Caco-2 (cell line): ENCODE measurements at regions of chr20 and their contacts with region 1.

Region 1: DNA sequence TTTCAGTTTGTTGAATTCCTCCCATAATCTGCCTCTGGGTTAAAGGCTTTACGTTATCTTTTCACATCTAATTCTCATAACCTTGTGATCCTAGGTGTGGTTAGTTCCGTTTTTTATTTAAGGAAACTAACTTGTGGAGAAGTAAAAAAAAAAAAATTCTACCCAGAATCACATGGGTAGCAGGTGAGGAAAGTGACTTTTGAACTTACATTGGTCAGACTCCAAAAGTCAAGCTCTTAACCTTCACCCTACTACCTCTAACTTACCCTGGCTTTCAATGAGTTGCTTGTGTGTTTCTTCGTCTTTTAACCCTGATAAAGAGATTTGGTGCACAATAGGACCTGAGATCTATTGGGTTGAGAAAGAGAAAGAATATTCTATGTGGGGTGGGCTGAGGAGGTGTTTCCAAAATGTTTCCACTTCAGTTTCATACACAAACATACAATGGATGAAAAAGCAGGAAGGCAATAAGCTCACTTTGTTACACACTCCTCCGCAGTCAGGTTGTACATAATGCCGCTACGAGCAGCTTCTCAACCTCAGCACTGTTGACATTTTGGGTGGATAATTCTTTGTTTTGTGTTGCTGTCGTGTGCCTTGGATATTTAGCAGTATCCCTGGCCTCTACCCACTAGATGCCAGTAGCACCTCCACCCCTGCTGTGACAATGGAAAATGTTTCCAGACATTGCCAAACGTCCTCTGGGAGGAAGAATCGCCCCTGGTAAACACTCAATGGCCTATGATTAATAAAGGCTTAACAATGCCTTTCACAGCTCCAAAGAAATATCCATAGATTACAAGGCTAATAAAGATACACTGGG is 193.0 kb upstream of the ZNF217 start:
- DNase-seq: peak; percentile 47 to 67
- H3K4me3 ChIP-seq: no peak overlapping the region; the same call in 1 of the 2 replicates
- H3K4me3 Mint-ChIP-seq: peak overlapping the region; percentile 39
- H3K27ac Mint-ChIP-seq: peak overlapping the region; percentile 59
- H3K4me1 ChIP-seq: peaks cover 71% of the 10 kb centered on the region
- H3K4me1 Mint-ChIP-seq: peaks cover 70% of the 10 kb centered on the region
- H3K27me3 ChIP-seq: no peaks in the 10 kb centered on the region
- H3K27me3 Mint-ChIP-seq: no peaks in the 10 kb centered on the region
- CTCF ChIP-seq: peak in 1 of 2 experiments; percentile 13

Region 2: GRCh38 chr20:53419693-53420460 is 366.8 kb before region 1 on chr20:
- CTCF ChIA-PET with region 1: no interaction called
- POLR2A ChIA-PET with region 1: no interaction called
- intact Hi-C with region 1: no loop called
- DNase-seq: no peak
- H3K4me3 ChIP-seq: no peak overlapping the region
- H3K4me3 Mint-ChIP-seq: no peak overlapping the region
- H3K27ac Mint-ChIP-seq: no peak overlapping the region
- H3K4me1 ChIP-seq: no peaks in the 10 kb centered on the region
- H3K4me1 Mint-ChIP-seq: no peaks in the 10 kb centered on the region
- H3K27me3 ChIP-seq: no peaks in the 10 kb centered on the region
- H3K27me3 Mint-ChIP-seq: peaks cover 3% of the 10 kb centered on the region
- CTCF ChIP-seq: no peak

Region 3: DNA sequence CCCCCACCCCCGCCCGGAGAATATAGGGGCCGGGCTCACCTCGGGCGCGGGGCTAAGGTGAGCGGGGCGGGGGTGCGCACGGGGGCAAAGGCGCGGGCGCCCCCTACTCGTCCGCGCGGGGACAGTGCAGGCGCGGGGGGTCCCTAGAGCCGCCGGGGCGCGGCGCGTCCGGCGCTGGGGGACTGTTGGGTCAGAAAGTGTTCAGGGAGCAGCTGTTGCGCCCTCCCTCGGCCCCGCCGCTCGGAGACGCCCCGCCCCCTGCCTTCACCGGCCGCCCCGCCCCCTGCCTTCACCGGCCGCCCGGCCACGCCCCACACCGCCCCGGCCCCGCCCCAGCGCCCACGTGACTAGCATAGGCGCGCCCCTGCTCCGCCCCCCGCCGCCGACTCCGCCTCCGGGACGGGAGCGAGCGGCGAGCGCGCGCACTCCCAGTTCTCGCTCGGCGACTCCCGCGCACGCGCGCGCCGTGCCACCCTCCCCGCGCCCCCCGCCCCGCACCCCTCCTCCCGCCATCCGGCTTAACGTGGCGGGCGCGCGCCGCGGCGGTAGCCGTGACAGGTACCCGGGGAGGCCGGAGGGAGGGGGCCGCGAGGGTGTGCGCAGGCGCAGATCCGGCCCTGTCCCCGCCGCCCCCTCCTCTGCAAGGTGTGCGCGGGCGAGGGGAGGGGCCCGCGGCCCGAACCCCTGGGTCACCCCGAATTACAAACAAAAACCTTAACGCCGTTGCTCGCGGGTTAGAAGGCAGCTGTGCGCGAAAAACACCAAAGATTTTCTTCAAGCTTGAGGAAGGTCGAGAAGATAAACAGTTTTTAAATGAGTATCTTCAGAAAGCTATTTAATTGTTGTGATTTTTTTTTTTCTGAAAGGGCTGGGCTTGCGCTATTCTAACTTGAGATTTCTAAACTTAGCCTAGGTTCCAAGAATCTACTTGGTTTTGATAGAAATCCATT is 192.3 kb before region 1 on chr20:
- CTCF ChIA-PET with region 1: interaction called, 3 read pairs
- POLR2A ChIA-PET with region 1: no interaction called
- intact Hi-C with region 1: loop called (anchors 5 kb)
- DNase-seq: peak; percentile 99 to 100
- H3K4me3 ChIP-seq: peak overlapping the region; percentile 98
- H3K4me3 Mint-ChIP-seq: peak overlapping the region; percentile 87
- H3K27ac Mint-ChIP-seq: peak overlapping the region; percentile 80
- H3K4me1 ChIP-seq: peaks cover 38% of the 10 kb centered on the region
- H3K4me1 Mint-ChIP-seq: peaks cover 44% of the 10 kb centered on the region
- H3K27me3 ChIP-seq: no peaks in the 10 kb centered on the region
- H3K27me3 Mint-ChIP-seq: no peaks in the 10 kb centered on the region
- CTCF ChIP-seq: peak; percentile 64 to 79

Region 4: DNA sequence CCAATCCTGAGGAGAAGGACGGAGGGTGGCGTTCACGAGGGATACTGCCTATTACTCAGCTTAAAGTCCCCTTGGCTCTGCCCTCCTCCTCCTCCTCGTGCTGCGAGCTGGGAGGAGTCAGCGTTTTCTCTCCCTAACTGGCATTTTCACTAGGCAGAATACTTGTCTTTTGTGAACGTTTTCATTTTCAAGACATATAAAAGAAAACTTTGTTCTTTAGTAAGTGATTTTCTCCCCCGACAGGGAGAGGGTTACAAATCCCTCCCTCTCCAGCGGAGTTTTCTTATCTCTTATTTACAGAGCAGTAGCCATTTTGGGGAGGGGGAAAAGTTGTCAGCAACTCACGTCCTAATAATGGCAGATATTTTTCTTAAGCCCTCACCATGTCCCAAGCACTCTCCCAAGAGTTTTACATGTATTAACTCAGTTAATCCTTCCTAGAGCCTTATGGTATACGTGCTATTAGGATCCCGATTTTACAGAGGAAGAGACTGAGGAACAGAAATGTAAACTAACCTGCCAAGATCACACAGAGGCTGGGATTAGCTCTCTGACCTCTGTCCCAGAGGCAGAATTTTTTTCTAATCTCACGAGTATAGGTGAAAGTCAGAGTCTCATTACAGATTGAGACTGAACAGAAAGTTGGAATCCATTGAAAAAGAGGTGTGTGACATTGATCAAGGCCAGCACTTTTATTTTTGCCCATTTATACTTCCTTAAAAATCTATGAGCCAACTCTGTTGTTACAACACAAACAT is 163.0 kb before region 1 on chr20:
- CTCF ChIA-PET with region 1: interaction called, 3 read pairs
- POLR2A ChIA-PET with region 1: no interaction called
- intact Hi-C with region 1: loop called (anchors 2 kb)
- DNase-seq: peak; percentile 86 to 89
- H3K4me3 ChIP-seq: peak overlapping the region; percentile 41
- H3K4me3 Mint-ChIP-seq: peak overlapping the region; percentile 83
- H3K27ac Mint-ChIP-seq: peak overlapping the region; percentile 97
- H3K4me1 ChIP-seq: peaks cover 33% of the 10 kb centered on the region
- H3K4me1 Mint-ChIP-seq: peaks cover 24% of the 10 kb centered on the region
- H3K27me3 ChIP-seq: no peaks in the 10 kb centered on the region
- H3K27me3 Mint-ChIP-seq: no peaks in the 10 kb centered on the region
- CTCF ChIP-seq: peak in 1 of 2 experiments; percentile 35

Region 5: GRCh38 chr20:53773792-53774401 is 12.8 kb before region 1 on chr20:
- CTCF ChIA-PET with region 1: interaction called, 18 read pairs
- POLR2A ChIA-PET with region 1: interaction called, 12 read pairs
- intact Hi-C with region 1: loop called (anchors 1 kb)
- DNase-seq: peak; percentile 29 to 52
- H3K4me3 ChIP-seq: no peak overlapping the region
- H3K4me3 Mint-ChIP-seq: peak overlapping the region; percentile 22
- H3K27ac Mint-ChIP-seq: peak overlapping the region; percentile 66
- H3K4me1 ChIP-seq: peaks cover 60% of the 10 kb centered on the region
- H3K4me1 Mint-ChIP-seq: peaks cover 64% of the 10 kb centered on the region
- H3K27me3 ChIP-seq: no peaks in the 10 kb centered on the region
- H3K27me3 Mint-ChIP-seq: no peaks in the 10 kb centered on the region
- CTCF ChIP-seq: no peak

Region 6: GRCh38 chr20:53828682-53829254 is 42.1 kb after region 1 on chr20:
- CTCF ChIA-PET with region 1: interaction called, 3 read pairs
- POLR2A ChIA-PET with region 1: no interaction called
- intact Hi-C with region 1: loop called (anchors 2 kb)
- DNase-seq: peak in 1 of 2 experiments; percentile 47
- H3K4me3 ChIP-seq: 0 out of 2 replicates have a peak overlapping the region, but pooled peaks have one; percentile 8
- H3K4me3 Mint-ChIP-seq: peak overlapping the region; percentile 65
- H3K27ac Mint-ChIP-seq: peak overlapping the region; percentile 81
- H3K4me1 ChIP-seq: peaks cover 35% of the 10 kb centered on the region
- H3K4me1 Mint-ChIP-seq: peaks cover 45% of the 10 kb centered on the region
- H3K27me3 ChIP-seq: no peaks in the 10 kb centered on the region
- H3K27me3 Mint-ChIP-seq: no peaks in the 10 kb centered on the region
- CTCF ChIP-seq: peak in 1 of 2 experiments; percentile 41

Region 7: GRCh38 chr20:53845980-53846379 is 59.3 kb after region 1 on chr20:
- CTCF ChIA-PET with region 1: interaction called, 11 read pairs
- POLR2A ChIA-PET with region 1: no interaction called
- intact Hi-C with region 1: loop called (anchors 1 kb)
- DNase-seq: no peak
- H3K4me3 ChIP-seq: no peak overlapping the region
- H3K4me3 Mint-ChIP-seq: no peak overlapping the region
- H3K27ac Mint-ChIP-seq: no peak overlapping the region
- H3K4me1 ChIP-seq: peaks cover 34% of the 10 kb centered on the region
- H3K4me1 Mint-ChIP-seq: peaks cover 39% of the 10 kb centered on the region
- H3K27me3 ChIP-seq: no peaks in the 10 kb centered on the region
- H3K27me3 Mint-ChIP-seq: no peaks in the 10 kb centered on the region
- CTCF ChIP-seq: no peak

Region 8: GRCh38 chr20:53939572-53940359 is 153.1 kb after region 1 on chr20:
- CTCF ChIA-PET with region 1: interaction called, 15 read pairs
- POLR2A ChIA-PET with region 1: no interaction called
- intact Hi-C with region 1: no loop called
- DNase-seq: peak; percentile 95 to 96
- H3K4me3 ChIP-seq: no peak overlapping the region
- H3K4me3 Mint-ChIP-seq: no peak overlapping the region
- H3K27ac Mint-ChIP-seq: no peak overlapping the region
- H3K4me1 ChIP-seq: peaks cover 30% of the 10 kb centered on the region
- H3K4me1 Mint-ChIP-seq: peaks cover 35% of the 10 kb centered on the region
- H3K27me3 ChIP-seq: no peaks in the 10 kb centered on the region; the same call in 1 of the 2 replicates
- H3K27me3 Mint-ChIP-seq: no peaks in the 10 kb centered on the region
- CTCF ChIP-seq: peak; percentile 93 to 98

Region 9: DNA sequence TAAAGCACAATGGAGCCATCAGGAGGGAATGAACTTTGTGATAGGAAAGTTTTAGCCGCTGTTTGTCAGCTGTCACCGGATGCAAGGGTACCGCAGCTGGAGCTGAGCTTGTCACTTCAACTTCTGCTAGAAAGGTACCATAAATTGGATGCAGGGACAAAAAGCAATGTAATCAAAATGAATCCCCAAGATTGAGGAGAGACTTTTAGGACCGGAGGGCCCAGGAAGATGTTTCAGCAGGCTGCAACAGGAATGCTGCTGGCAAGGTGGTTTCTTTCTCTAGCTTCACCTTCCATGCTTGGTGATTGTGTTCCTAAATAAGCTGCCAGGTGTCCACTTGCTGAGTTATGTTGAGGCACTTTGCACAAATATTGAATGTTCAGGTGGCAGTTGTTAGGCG is 906.5 kb after region 1 on chr20:
- CTCF ChIA-PET with region 1: no interaction called
- POLR2A ChIA-PET with region 1: no interaction called
- intact Hi-C with region 1: no loop called
- DNase-seq: no peak
- H3K4me3 ChIP-seq: no peak overlapping the region
- H3K4me3 Mint-ChIP-seq: no peak overlapping the region
- H3K27ac Mint-ChIP-seq: no peak overlapping the region
- H3K4me1 ChIP-seq: no peaks in the 10 kb centered on the region
- H3K4me1 Mint-ChIP-seq: no peaks in the 10 kb centered on the region
- H3K27me3 ChIP-seq: no peaks in the 10 kb centered on the region
- H3K27me3 Mint-ChIP-seq: peaks cover 19% of the 10 kb centered on the region
- CTCF ChIP-seq: no peak